CD8-positive, alpha-beta T cell (primary cell): ENCODE measurements at regions of chr1 and their contacts with region 1.

Region 1: DNA sequence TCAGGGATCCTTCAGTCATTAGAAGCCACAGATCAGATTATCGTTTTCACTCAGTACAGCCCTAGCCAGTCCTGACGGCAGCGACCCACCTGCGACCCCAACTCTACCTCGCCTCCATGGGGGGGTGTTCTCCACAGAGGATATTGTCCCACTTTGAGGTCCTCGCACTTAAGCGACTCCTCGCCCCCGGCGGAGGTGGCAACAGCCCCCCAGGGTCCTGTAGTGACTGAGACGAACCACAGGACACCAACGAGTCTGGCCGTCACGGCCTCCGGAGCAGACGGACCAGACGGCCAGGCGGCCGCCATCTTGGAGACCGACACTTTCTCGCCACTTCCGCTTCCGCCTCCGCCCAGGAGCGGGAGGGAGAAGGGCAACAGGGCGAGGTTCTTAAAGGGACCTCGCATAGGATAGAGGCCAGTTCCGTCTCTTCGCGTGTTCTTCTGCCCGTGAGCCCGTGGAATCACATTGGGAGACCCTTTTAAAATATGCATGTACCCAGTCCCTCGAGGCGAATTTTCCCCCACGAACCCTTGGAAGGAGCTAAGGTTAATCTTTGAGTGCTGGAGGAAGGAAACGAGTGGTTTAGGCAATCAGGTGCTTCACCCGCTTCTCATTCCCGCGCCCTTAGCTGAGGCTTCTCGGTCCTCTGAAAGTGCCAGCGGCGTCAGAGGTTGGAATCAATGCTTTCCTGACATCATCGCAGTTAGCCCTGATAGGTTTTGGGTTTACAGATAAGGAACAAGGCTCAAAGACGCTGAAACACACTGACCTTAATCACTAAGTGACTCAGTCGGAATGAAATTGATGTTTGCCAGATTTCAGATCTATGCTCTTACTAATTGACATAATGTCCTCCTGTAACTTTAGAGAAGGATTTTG is at the start of gene TM2D1:
- DNase-seq: peak; percentile 66 to 92 (median 84)
- ATAC-seq: peak; percentile 91
- H3K4me3 ChIP-seq: peak within 1 kb of the TSS; percentile 85 to 93
- H3K4me3 Mint-ChIP-seq: peak within 1 kb of the TSS; percentile 96
- H3K27ac ChIP-seq: peak within 1 kb of the TSS; percentile 85 to 89
- H3K27ac Mint-ChIP-seq: peak within 1 kb of the TSS; percentile 96
- H3K4me1 ChIP-seq: peaks cover 21% of the 10 kb centered on the region
- H3K4me1 Mint-ChIP-seq: peaks cover 34% of the 10 kb centered on the region
- H3K27me3 ChIP-seq: no peaks in the 10 kb centered on the region
- H3K27me3 Mint-ChIP-seq: no peaks in the 10 kb centered on the region
- CTCF ChIP-seq: no peak
- total RNA-seq, gene TM2D1: 12.7 to 14.8 TPM

Region 2: GRCh38 chr1:61708953-61709907 is 15.8 kb before region 1 on chr1:
- CTCF ChIA-PET with region 1: no interaction called
- POLR2A ChIA-PET with region 1: no interaction called
- intact Hi-C with region 1: loop called in 1 of 2 experiments (anchors 1 kb)
- DNase-seq: no peak
- ATAC-seq: no peak
- H3K4me3 ChIP-seq: no peak overlapping the region
- H3K4me3 Mint-ChIP-seq: no peak overlapping the region
- H3K27ac ChIP-seq: no peak overlapping the region
- H3K27ac Mint-ChIP-seq: no peak overlapping the region
- H3K4me1 ChIP-seq: no peaks in the 10 kb centered on the region
- H3K4me1 Mint-ChIP-seq: peaks cover 13% of the 10 kb centered on the region
- H3K27me3 ChIP-seq: no peaks in the 10 kb centered on the region
- H3K27me3 Mint-ChIP-seq: no peaks in the 10 kb centered on the region
- CTCF ChIP-seq: no peak

Region 3: DNA sequence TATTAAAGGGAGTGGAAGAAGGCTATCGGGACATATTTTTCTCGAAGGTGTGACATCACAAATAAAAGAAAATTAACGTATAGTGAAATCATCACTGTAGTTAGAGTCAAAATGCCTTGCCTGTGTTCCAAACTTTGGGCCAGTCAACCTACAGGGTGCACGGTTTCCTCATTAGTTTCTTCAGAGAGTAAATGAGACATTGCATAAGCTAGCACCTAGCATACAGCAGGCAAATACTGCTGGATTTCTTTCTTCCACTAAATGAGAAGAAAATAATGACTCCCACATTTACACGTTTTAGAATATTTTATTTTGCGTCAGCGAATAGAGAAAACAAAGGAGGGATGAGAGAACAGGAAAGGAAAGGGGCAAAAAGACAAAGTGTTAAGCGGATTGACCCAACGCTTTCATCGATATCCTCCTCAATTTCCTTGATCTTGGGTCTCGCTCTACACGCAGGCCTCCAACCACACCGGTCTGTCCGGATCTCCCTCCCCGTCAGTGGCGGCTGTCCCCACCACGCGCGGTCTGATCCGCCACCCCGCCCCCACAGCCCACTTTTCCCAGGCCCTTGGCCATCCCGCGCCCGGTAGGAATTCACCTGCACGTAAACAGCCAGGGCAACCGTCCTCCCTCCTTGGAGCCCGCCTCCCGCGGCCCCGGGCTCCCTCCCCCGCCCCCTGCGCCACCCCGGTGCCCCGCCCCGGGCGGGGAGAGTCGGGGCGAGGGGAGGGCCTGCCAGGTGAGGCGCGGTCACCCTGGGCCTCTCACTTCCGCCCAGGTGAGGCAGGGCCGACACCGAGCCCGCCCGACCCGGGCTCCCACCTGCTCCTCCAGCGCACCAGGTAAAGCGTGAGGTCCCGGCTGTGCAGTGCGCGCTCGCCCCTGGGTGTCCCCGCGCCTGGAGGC is 16.9 kb after region 1 on chr1 and contains the start of gene PATJ:
- CTCF ChIA-PET with region 1: no interaction called
- POLR2A ChIA-PET with region 1: interaction called, 4 read pairs
- intact Hi-C with region 1: loop called (anchors 1 kb)
- DNase-seq: peak; percentile 22 to 81 (median 68)
- ATAC-seq: peak; percentile 90
- H3K4me3 ChIP-seq: peak within 1 kb of the TSS; percentile 49 to 78
- H3K4me3 Mint-ChIP-seq: peak within 1 kb of the TSS; percentile 95
- H3K27ac ChIP-seq: peak within 1 kb of the TSS; percentile 60 to 68
- H3K27ac Mint-ChIP-seq: peak within 1 kb of the TSS; percentile 94
- H3K4me1 ChIP-seq: peaks cover 7% of the 10 kb centered on the region
- H3K4me1 Mint-ChIP-seq: peaks cover 31% of the 10 kb centered on the region
- H3K27me3 ChIP-seq: no peaks in the 10 kb centered on the region
- H3K27me3 Mint-ChIP-seq: no peaks in the 10 kb centered on the region
- CTCF ChIP-seq: no peak
- total RNA-seq, gene PATJ: 33.7 to 35.4 TPM

Region 4: GRCh38 chr1:61782771-61783170 is 57.7 kb after region 1 on chr1:
- CTCF ChIA-PET with region 1: no interaction called
- POLR2A ChIA-PET with region 1: no interaction called
- intact Hi-C with region 1: loop called (anchors 1 kb)
- DNase-seq: peak; percentile 11 to 88 (median 66)
- ATAC-seq: peak; percentile 96
- H3K4me3 ChIP-seq: peak overlapping the region in 1 of 2 experiments; percentile 14
- H3K4me3 Mint-ChIP-seq: peak overlapping the region; percentile 76
- H3K27ac ChIP-seq: peak overlapping the region; percentile 24 to 47
- H3K27ac Mint-ChIP-seq: peak overlapping the region; percentile 85
- H3K4me1 ChIP-seq: peaks cover 37% of the 10 kb centered on the region
- H3K4me1 Mint-ChIP-seq: peaks cover 61% of the 10 kb centered on the region
- H3K27me3 ChIP-seq: no peaks in the 10 kb centered on the region
- H3K27me3 Mint-ChIP-seq: no peaks in the 10 kb centered on the region
- CTCF ChIP-seq: no peak

Region 5: GRCh38 chr1:62436466-62437256 is 711.6 kb after region 1 on chr1 and contains the start of gene USP1:
- CTCF ChIA-PET with region 1: no interaction called
- POLR2A ChIA-PET with region 1: no interaction called
- intact Hi-C with region 1: loop called (anchors 2 to 5 kb)
- DNase-seq: peak; percentile 94 to 100 (median 96)
- ATAC-seq: peak; percentile 82
- H3K4me3 ChIP-seq: peak within 1 kb of the TSS; percentile 90 to 97
- H3K4me3 Mint-ChIP-seq: peak within 1 kb of the TSS; percentile 98
- H3K27ac ChIP-seq: peak within 1 kb of the TSS; percentile 96 to 98
- H3K27ac Mint-ChIP-seq: peak within 1 kb of the TSS; percentile 100
- H3K4me1 ChIP-seq: peaks cover 33% of the 10 kb centered on the region
- H3K4me1 Mint-ChIP-seq: peaks cover 40% of the 10 kb centered on the region
- H3K27me3 ChIP-seq: no peaks in the 10 kb centered on the region
- H3K27me3 Mint-ChIP-seq: no peaks in the 10 kb centered on the region
- CTCF ChIP-seq: no peak
- total RNA-seq, gene USP1: 23.1 to 23.7 TPM